ENCODE measurements at regions of chr9 and their contacts with region 1.

Region 1: GRCh38 chr9:127642082-127642740 is 30.1 kb downstream of the STXBP1 start:
- DNase-seq: no peak
- H3K4me3 ChIP-seq: no peak overlapping the region
- H3K27ac ChIP-seq: no peak overlapping the region
- H3K4me1 ChIP-seq: no peaks in the 10 kb centered on the region
- H3K27me3 ChIP-seq: no peaks in the 10 kb centered on the region
- CTCF ChIP-seq: no peak

Region 2: DNA sequence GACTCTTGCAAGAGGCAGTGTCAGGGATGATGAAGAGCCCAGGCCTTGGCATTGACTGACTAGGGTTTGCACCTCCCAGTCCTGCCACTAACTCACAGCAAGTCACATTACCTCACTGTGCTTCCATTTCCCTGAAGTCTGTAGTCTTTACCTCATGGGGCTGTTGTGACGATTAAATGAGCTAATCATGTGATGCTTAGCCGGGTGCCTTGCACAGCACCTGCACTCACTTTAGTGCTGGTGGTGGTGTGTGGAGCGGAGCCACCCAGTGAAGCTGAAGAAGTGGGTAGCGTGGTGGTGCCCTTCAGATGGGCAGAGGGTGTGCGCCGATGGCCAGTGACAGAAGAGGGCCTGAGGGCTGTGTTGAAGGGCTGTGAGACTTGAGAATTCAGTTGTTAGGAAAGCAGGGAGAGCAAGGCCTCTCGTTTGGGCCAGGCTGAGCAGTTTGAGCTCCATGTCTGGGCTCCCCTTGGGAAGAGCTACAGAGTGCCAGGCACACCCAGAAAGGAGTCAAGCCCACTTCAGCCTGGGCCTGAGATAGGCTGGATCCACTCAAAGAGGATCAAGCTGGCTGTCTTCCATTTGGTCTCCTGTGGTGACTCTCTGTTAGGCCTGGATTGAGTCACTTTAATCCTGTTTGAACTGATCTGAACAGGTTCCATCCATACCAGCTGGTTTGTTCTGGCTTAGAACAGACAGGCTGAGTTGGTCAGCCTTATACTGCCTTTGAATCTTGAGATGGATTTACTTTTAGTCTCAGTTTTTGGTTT is 685.1 kb before region 1 on chr9:
- CTCF ChIA-PET with region 1: no interaction called
- POLR2A ChIA-PET with region 1: no interaction called
- intact Hi-C with region 1: no loop called
- DNase-seq: peak; percentile 10 to 64
- H3K4me3 ChIP-seq: no peak overlapping the region
- H3K27ac ChIP-seq: peak overlapping the region; percentile 52; the same call in 1 of the 2 replicates
- H3K4me1 ChIP-seq: peaks cover 20% of the 10 kb centered on the region
- H3K27me3 ChIP-seq: no peaks in the 10 kb centered on the region
- CTCF ChIP-seq: no peak

Region 3: DNA sequence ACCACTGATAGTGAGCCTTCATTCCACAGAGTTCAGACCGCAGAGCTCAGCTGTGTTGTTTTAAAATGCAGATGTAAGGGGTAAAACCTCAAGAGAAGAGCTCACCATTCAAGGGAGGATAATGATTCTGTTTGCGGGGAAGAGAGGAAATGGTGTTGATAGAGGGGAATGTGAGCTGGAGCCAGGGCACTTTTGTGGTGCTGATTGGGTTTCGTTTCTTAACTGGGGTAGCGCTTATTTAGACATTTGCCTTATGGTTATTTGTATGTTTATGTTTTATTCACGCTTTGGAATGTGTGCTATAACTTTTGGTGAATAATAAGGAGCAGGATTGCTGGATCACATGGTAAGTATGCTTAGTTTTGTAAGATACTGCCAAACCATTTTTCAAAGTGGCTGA is 12.4 kb after region 1 on chr9:
- CTCF ChIA-PET with region 1: no interaction called
- POLR2A ChIA-PET with region 1: no interaction called
- intact Hi-C with region 1: no loop called
- DNase-seq: no peak
- H3K4me3 ChIP-seq: no peak overlapping the region
- H3K27ac ChIP-seq: no peak overlapping the region
- H3K4me1 ChIP-seq: no peaks in the 10 kb centered on the region
- H3K27me3 ChIP-seq: no peaks in the 10 kb centered on the region
- CTCF ChIP-seq: no peak

Region 4: GRCh38 chr9:127723450-127723849 is 81.2 kb after region 1 on chr9:
- CTCF ChIA-PET with region 1: no interaction called
- POLR2A ChIA-PET with region 1: interaction called, 14 read pairs
- intact Hi-C with region 1: no loop called
- DNase-seq: peak in 1 of 2 experiments; percentile 28
- H3K4me3 ChIP-seq: no peak overlapping the region
- H3K27ac ChIP-seq: no peak overlapping the region
- H3K4me1 ChIP-seq: peaks cover 16% of the 10 kb centered on the region
- H3K27me3 ChIP-seq: no peaks in the 10 kb centered on the region
- CTCF ChIP-seq: no peak

Region 5: DNA sequence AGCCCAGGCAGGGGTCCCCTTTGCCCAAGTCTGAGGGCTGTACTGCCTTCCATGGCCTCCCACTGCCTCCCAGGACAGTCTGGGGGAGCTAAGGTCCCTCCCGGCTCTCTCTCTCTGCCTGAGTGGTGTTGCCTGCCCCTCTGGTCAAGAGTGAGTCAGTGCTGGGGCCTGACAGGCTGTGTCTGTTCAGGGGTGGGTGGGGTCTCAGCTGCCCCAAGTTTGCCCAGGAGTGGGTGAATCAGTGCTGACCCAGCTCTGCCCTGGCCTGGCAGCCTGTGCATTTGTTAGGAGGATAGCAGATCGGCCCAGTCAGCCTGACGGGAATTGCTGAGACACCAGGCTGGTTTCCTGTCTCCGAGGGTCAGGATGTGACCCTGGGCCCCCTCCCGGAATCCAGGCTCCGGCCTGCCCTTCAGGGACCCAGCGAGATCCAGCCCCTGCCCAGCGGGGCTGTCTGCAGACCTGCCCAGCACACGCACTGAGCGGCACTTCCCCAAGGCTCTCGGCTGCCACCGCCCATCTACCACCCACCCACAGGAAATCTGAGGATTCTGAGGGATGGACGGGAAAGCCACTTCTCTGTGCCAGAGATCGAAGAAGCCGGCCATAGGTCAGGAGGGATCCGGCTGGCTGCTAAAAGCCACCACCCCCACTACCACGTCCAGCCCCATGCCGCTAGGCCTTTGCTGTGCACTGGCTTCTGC is 196.3 kb after region 1 on chr9:
- CTCF ChIA-PET with region 1: no interaction called
- POLR2A ChIA-PET with region 1: no interaction called
- intact Hi-C with region 1: no loop called
- DNase-seq: peak; percentile 78 to 88
- H3K4me3 ChIP-seq: peak overlapping the region; percentile 47; the same call in 1 of the 2 replicates
- H3K27ac ChIP-seq: peak overlapping the region; percentile 76
- H3K4me1 ChIP-seq: peaks cover 25% of the 10 kb centered on the region
- H3K27me3 ChIP-seq: no peaks in the 10 kb centered on the region
- CTCF ChIP-seq: no peak